Activated CD4-positive, alpha-beta T cell treated with anti-CD3 and anti-CD28 coated beads for 36 hours (primary cell): ENCODE measurements at regions of chr19 and their contacts with region 1.

Region 1: DNA sequence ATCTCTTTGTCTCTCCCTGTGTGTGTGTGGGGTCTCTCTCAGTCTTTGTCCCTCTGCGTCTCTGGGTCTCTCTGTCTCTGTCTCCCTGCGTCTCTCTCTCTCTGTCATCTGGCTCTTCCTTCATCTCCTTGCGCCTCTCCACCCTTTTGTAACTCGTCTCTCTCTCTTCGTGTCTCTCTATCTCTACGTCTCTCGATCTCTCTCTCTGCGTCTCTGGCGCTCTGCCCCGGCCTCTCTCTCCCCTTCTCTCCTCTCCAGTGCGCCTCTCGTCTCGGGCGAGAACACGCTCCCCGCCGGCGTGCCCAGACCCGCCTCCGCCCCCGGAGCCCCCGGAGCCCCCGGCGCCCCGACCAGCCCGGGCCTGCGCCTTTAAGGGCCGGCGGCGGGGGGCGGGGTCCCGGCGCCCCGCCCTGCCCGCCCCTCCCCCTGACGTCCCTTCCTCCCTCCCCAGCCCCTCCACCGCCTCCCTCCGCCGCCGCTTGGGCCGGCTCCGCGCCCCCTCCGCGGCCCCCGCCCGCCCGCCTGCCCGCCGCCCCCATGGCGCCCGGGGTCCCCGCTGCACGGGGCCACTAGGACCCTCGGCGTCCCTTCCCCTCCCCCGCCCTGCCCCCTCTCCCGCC is at the start of gene MARK4:
- DNase-seq: peak; percentile 72
- ATAC-seq: peak; percentile 67
- H3K4me3 Mint-ChIP-seq: peak within 1 kb of the TSS; percentile 77
- H3K27ac Mint-ChIP-seq: peak within 1 kb of the TSS; percentile 76
- H3K4me1 Mint-ChIP-seq: peaks cover 29% of the 10 kb centered on the region
- H3K27me3 Mint-ChIP-seq: peaks cover 2% of the 10 kb centered on the region
- total RNA-seq, gene MARK4: 19.1 to 19.6 TPM

Region 2: DNA sequence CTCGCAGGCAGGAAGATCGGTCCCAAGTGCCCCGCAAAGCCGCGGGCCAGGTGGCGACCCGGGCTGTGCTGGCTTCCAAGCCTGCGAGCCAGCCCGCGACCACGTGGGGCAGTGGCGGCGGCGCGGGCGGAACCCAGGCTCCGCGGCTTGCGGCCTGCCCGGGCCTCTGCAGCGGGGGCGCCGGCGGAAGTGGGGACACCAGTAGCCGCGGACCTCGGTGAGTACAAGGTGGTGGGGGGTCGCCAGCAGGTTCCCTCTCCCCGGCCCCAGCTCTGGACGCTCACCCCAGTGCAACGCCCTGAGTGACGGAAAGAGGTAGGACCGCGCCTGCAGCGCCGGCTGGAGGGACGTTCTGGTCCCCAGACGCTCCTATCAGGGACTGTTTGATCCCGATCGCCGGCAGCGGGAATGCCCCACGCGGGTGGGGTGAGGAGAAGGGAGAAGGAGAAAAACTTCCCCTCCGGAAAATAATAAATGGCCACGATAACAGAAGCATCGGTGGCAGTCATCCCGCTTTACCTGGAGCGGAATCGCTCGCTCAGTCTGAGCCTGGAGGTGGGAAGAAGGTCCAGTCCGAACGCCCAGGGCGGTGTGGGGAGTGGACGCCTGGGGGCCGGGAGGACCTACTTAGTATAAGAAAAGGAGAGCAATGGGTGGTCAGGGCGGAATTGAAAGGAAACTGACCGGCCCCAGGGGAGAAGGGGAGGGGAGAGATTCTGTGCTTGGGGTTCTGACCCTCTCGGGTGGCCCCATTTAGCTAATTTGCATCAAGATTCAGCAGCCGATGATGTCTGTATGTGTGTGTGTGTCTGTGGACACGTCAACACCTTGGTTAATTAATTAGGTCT is 171.7 kb before region 1 on chr19 and contains the start of gene GEMIN7:
- CTCF ChIA-PET with region 1: no interaction called
- POLR2A ChIA-PET with region 1: no interaction called
- intact Hi-C with region 1: loop called in 1 of 2 experiments (anchors 2 kb)
- DNase-seq: peak; percentile 90
- ATAC-seq: peak; percentile 65
- H3K4me3 Mint-ChIP-seq: peak within 1 kb of the TSS; percentile 99
- H3K27ac Mint-ChIP-seq: peak within 1 kb of the TSS; percentile 88
- H3K4me1 Mint-ChIP-seq: peaks cover 43% of the 10 kb centered on the region
- H3K27me3 Mint-ChIP-seq: no peaks in the 10 kb centered on the region
- total RNA-seq, gene GEMIN7: 35.4 to 35.5 TPM

Region 3: DNA sequence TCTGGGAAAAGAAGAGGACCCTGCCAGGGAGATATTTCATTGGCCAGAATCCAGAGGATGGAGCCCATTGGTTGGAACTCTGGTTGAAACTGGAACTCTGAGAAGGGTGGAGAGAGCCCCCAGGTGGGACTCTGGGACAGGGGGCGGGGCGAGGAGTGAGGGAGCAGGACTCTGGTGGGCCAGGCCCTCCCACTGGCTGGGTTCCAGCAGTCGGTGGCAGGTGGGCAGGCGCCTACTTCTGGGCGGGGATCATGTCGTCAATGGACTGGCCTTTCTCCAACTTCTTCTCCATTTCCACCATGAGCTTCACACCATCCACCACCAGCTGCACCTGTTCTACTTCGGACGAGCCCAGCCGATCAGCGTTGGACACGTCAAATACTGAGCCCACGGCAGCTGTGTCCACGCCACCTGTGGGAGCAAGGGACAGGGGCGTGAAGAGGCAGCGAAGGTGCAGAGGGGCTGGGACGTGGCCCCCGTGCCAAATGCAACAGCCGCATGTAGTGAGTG is 55.6 kb after region 1 on chr19:
- CTCF ChIA-PET with region 1: no interaction called
- POLR2A ChIA-PET with region 1: no interaction called
- intact Hi-C with region 1: loop called in 1 of 2 experiments (anchors 1 kb)
- DNase-seq: no peak
- ATAC-seq: no peak
- H3K4me3 Mint-ChIP-seq: no peak overlapping the region
- H3K27ac Mint-ChIP-seq: no peak overlapping the region
- H3K4me1 Mint-ChIP-seq: no peaks in the 10 kb centered on the region
- H3K27me3 Mint-ChIP-seq: no peaks in the 10 kb centered on the region

Region 4: DNA sequence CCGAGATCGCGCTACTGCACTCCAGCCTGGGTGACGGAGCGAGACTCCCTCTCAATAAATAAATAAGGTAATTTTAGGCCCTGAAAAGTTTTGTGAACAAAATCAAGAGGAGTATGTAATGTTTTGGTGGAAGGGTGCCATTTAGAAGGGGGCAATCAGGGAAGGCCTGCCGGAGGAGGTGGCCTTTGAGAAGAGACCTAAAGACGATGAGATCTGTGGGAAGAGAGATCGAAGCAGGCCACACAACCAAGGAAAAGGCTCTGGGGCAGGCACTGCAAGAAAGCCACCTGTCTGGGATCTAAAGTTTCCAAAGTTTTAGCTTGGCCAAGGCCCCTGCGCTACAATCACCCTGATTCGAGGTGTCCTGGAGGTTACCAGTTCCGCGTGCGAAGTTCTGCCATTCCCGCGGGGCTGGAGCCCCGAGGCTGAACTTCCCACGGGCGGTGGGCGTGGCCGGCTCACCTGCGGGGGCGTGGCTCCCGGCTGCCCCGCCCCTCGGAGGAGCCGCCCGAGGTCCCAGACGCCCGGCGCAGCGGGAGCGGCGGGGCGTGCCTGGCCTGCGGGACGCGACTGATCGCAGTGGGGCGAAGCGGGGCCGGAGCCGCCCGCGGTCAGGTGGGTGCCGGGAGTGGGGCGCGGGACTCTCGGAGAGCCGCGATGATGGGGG is 89.4 kb after region 1 on chr19 and contains the start of gene KLC3:
- CTCF ChIA-PET with region 1: interaction called, 13 read pairs
- POLR2A ChIA-PET with region 1: no interaction called
- intact Hi-C with region 1: loop called (anchors 2 to 5 kb)
- DNase-seq: peak; percentile 65
- ATAC-seq: peak; percentile 29
- H3K4me3 Mint-ChIP-seq: peak within 1 kb of the TSS; percentile 25
- H3K27ac Mint-ChIP-seq: no peak within 1 kb of the TSS
- H3K4me1 Mint-ChIP-seq: peaks cover 6% of the 10 kb centered on the region
- H3K27me3 Mint-ChIP-seq: peaks cover 18% of the 10 kb centered on the region
- total RNA-seq, gene KLC3: 0.11 to 0.14 TPM

Region 5: DNA sequence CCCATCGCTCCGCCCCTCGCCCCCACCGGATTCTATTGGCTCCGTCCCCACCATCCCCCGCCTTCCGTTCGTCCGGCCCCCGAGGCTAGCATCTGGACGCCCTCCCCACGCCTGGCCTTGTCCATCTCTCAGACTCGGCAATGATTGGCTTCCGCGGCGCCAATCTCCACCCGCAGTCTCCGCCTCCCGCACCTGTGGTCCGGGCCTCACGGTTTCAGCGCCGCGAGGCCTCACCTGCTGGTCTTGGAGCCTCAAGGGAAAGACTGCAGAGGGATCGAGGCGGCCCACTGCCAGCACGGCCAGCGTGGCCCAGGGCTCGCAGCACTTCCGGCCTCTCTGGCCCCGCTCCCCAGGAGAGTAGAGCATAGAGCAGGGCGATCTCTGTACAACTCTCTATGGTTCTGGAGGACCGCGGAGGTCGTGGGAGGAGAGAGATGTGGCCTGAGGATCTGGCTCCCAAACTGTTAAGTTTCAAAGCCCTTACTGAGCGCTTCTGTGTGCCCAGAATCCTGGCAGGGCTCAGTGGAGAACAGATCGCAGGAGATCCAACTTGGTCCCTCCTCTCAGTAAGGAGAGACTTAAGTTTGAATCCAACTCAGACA is 172.7 kb after region 1 on chr19 and contains the start of gene ERCC1:
- CTCF ChIA-PET with region 1: no interaction called
- POLR2A ChIA-PET with region 1: no interaction called
- intact Hi-C with region 1: no loop called
- DNase-seq: peak; percentile 84
- ATAC-seq: peak; percentile 78
- H3K4me3 Mint-ChIP-seq: peak within 1 kb of the TSS; percentile 92
- H3K27ac Mint-ChIP-seq: peak within 1 kb of the TSS; percentile 95
- H3K4me1 Mint-ChIP-seq: peaks cover 55% of the 10 kb centered on the region
- H3K27me3 Mint-ChIP-seq: peaks cover 2% of the 10 kb centered on the region
- total RNA-seq, gene ERCC1: 58.1 to 71.8 TPM

Region 6: GRCh38 chr19:45469132-45469944 is 218.4 kb after region 1 on chr19:
- CTCF ChIA-PET with region 1: no interaction called
- POLR2A ChIA-PET with region 1: no interaction called
- intact Hi-C with region 1: loop called in 1 of 2 experiments (anchors 2 kb)
- DNase-seq: peak; percentile 97
- ATAC-seq: peak; percentile 82
- H3K4me3 Mint-ChIP-seq: peak overlapping the region; percentile 78
- H3K27ac Mint-ChIP-seq: peak overlapping the region; percentile 86
- H3K4me1 Mint-ChIP-seq: peaks cover 29% of the 10 kb centered on the region
- H3K27me3 Mint-ChIP-seq: peaks cover 11% of the 10 kb centered on the region